B cell (primary cell): ENCODE measurements at regions of chr6 and their contacts with region 1.

Region 1: GRCh38 chr6:131914967-131915751 is 36.0 kb downstream of the CCN2 start:
- DNase-seq: peak; percentile 75
- ATAC-seq: peak; percentile 80
- H3K4me3 ChIP-seq: no peak overlapping the region
- H3K4me3 Mint-ChIP-seq: no peak overlapping the region
- H3K27ac ChIP-seq: no peak overlapping the region
- H3K27ac Mint-ChIP-seq: no peak overlapping the region
- H3K4me1 ChIP-seq: peaks cover 17 to 20% of the 10 kb centered on the region in 2 donors
- H3K4me1 Mint-ChIP-seq: peaks cover 21% of the 10 kb centered on the region
- H3K27me3 ChIP-seq: peaks cover 0 to 27% (median 12%) of the 10 kb centered on the region in 4 experiments
- H3K27me3 Mint-ChIP-seq: peaks cover 39% of the 10 kb centered on the region
- CTCF ChIP-seq: peak; percentile 88

Region 2: DNA sequence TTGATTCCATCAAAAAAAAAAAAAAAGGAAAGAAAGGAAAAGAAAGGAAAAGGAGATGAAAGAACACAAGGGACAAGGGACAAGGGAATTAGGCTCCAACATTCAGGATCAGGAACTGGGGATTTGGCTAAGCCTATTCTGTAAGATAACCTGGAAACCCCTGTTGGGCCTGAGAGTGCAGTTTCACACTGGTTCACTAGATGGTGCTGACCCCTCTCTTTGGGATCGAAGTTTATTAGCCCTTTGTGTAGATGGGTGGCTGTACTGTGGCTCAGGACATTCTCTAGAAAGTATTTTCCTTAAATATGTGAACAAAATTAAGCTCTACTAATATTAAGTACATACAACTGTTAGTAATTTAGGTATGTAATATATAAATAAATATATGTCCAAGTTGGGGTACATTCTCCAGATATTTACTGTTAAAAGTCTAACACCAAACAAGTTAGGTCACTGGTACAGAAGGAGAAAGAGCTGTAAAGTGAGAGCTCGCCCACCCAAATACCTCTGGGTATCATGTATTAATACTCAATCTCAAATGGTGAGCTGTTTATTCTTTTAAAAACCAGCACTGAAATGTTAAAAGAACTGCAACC is 220.2 kb before region 1 on chr6:
- CTCF ChIA-PET with region 1: interaction called, 72 read pairs
- POLR2A ChIA-PET with region 1: no interaction called
- intact Hi-C with region 1: loop called (anchors 1 kb)
- DNase-seq: peak; percentile 65
- ATAC-seq: peak; percentile 82
- H3K4me3 ChIP-seq: no peak overlapping the region
- H3K4me3 Mint-ChIP-seq: no peak overlapping the region
- H3K27ac ChIP-seq: no peak overlapping the region
- H3K27ac Mint-ChIP-seq: no peak overlapping the region
- H3K4me1 ChIP-seq: peaks cover 18 to 24% of the 10 kb centered on the region in 2 donors
- H3K4me1 Mint-ChIP-seq: peaks cover 21% of the 10 kb centered on the region
- H3K27me3 ChIP-seq: no peaks in the 10 kb centered on the region
- H3K27me3 Mint-ChIP-seq: no peaks in the 10 kb centered on the region
- CTCF ChIP-seq: peak; percentile 74

Region 3: GRCh38 chr6:131875647-131876046 is 39.5 kb before region 1 on chr6:
- CTCF ChIA-PET with region 1: no interaction called
- POLR2A ChIA-PET with region 1: no interaction called
- intact Hi-C with region 1: no loop called
- DNase-seq: no peak
- ATAC-seq: no peak
- H3K4me3 ChIP-seq: no peak overlapping the region
- H3K4me3 Mint-ChIP-seq: no peak overlapping the region
- H3K27ac ChIP-seq: no peak overlapping the region
- H3K27ac Mint-ChIP-seq: no peak overlapping the region
- H3K4me1 ChIP-seq: no peaks in the 10 kb centered on the region
- H3K4me1 Mint-ChIP-seq: no peaks in the 10 kb centered on the region
- H3K27me3 ChIP-seq: no peaks in the 10 kb centered on the region
- H3K27me3 Mint-ChIP-seq: no peaks in the 10 kb centered on the region
- CTCF ChIP-seq: no peak